Activated T-helper 1 cell treated with anti-CD3 and anti-CD28 coated beads, Interleukin-12 subunit alpha, Interleukin-12 subunit beta, Interleukin-2, Interleukin-4 antibody, amounts not matched to agents 30 ng/mL and 10 ng/mL and 1 ng/mL, durations not matched to agents 14 hours and 24 hours and 36 hours (primary cell): ENCODE measurements at regions of chr3 and their contacts with region 1.

Region 1: DNA sequence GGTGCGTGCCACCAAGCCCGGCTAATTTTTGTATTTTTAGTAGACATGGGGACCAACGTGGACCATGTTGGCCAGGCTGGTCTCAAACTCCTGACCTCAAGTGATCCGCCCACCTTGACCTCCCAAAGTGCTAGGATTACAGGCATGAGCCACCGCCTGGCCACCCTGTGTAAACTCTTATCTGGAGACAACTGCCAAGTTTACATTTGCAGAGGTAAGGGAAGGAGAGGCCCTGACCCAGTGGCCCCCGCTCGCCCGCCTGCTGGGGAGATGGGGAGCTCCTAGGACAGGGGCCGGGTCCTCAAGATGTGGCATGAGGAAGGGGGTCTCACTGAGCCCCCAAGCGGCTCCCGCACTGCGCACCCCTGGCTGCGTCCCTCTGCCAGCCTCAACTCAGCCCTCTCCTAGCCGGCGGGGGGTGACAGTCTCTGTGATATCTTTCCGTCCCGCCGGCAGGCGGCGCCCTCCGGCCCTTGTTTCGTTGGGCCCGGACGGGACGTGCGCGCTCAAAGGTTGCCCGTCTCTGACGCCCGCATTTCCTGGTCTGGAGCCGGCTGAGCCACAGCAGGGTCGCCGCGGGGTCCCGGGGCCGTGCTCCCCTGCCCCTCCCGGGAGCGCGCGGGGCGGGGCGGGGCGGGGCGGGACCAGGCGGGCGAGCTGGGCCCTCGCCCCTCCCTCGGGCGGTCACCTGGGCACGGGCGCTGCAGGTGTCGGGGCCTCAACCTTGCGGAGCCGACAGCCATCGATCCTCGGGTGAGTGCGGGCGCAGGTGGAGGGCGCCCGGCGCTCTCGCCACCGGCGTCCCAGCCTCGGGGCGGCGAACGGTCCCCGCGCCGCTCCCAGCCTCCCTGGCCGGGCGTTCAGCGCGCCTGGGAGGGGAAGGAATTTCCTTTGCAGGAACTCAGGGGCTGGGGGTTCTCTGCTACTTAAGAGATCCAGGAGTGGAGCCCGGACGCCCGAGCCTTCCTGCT is at the start of gene GPR160:
- DNase-seq: peak; percentile 73
- H3K4me3 Mint-ChIP-seq: peak within 1 kb of the TSS; percentile 82
- H3K27ac Mint-ChIP-seq: peak within 1 kb of the TSS; percentile 42
- H3K4me1 Mint-ChIP-seq: peaks cover 24% of the 10 kb centered on the region
- H3K27me3 Mint-ChIP-seq: peaks cover 4% of the 10 kb centered on the region
- total RNA-seq, gene GPR160: 3.4 and 3.5 TPM in 2 replicates

Region 2: DNA sequence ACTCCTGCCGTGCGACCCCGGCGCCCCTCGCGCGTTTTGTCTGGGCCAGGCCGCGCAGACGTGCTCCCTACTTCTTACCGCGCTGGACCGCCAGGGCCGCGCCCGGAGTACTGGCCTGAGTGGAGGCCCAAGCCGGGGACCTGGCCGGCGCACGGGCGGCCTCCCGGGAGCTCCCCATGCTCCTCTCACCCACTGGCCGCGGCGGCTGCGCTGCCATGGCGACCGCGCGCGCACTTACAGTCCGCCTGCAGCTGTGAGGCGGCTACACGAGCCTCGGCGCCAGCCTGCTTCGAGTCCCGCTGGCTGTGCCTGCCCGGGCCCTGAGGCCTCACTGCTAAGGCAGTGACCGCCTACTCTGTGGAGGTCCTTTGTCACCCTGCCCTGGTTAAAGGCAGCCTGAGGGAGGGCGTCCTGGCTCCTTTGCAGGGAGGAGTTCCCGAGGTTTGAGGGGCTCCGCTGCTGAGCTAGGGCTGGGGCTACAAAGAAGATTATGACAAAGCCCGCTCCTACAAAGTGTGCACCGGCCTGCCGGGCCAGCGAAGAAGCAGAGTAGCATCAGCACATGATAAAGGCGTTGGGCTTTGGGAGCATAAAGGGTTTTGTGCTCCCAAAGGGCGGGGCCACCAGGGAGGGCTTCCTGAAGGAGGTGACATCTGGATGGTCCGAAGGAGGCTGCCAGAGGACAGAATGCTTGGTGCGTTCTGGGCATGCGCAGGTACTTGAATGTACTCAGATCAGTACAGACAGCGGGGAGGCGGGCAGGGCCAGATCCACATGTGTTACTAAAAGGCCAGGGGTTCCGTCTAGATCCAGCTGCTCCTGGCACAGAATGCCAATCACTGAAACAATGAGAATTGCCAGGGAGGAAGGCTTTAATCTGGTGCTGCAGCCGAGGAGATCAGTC is 225.2 kb before region 1 on chr3 and contains the starts of genes LRRC34 and LRRIQ4:
- intact Hi-C with region 1: loop called (anchors 2 kb)
- DNase-seq: peak; percentile 64
- H3K4me3 Mint-ChIP-seq: peak within 1 kb of the TSS; percentile 83
- H3K27ac Mint-ChIP-seq: peak within 1 kb of the TSS; percentile 89
- H3K4me1 Mint-ChIP-seq: peaks cover 49% of the 10 kb centered on the region
- H3K27me3 Mint-ChIP-seq: peaks cover 6% of the 10 kb centered on the region
- total RNA-seq, gene LRRC34: 2.8 and 2.9 TPM in 2 replicates
- total RNA-seq, gene LRRIQ4: 0.10 and 0.12 TPM in 2 replicates

Region 3: DNA sequence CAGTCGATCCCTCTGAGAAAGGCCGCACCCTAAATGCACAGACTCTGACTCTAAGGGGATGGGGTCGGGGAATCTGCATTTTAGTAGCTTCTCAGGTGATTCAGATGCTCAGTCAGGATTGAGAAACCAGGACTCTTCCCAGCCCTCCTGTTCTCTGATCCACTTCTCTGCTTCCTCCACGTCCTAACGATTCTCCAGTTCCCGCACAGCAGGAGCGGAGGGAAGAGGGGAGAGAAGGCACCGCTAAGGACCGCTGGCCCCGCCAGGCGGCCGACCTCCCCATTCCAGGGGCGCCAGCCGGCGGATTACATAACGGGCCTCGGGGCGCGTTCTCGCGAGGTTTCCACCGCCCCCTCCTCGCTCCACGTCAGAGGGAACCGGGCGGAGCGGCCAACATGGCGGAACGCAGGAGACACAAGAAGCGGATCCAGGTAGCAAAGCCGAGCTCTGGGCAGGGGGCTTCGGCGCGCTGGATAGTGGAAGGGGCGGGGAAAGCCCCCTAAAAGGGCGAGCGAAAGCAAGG is 71.3 kb before region 1 on chr3 and contains the start of gene SEC62:
- intact Hi-C with region 1: loop called (anchors 2 kb)
- DNase-seq: peak; percentile 90
- H3K4me3 Mint-ChIP-seq: peak within 1 kb of the TSS; percentile 91
- H3K27ac Mint-ChIP-seq: peak within 1 kb of the TSS; percentile 99
- H3K4me1 Mint-ChIP-seq: peaks cover 42% of the 10 kb centered on the region
- H3K27me3 Mint-ChIP-seq: peaks cover 2% of the 10 kb centered on the region
- total RNA-seq, gene SEC62: 75.4 and 85.7 TPM in 2 replicates

Region 4: GRCh38 chr3:170055209-170055608 is 17.5 kb after region 1 on chr3:
- intact Hi-C with region 1: loop called (anchors 1 kb)
- DNase-seq: no peak
- H3K4me3 Mint-ChIP-seq: no peak overlapping the region
- H3K27ac Mint-ChIP-seq: no peak overlapping the region
- H3K4me1 Mint-ChIP-seq: peaks cover 43% of the 10 kb centered on the region
- H3K27me3 Mint-ChIP-seq: no peaks in the 10 kb centered on the region

Region 5: DNA sequence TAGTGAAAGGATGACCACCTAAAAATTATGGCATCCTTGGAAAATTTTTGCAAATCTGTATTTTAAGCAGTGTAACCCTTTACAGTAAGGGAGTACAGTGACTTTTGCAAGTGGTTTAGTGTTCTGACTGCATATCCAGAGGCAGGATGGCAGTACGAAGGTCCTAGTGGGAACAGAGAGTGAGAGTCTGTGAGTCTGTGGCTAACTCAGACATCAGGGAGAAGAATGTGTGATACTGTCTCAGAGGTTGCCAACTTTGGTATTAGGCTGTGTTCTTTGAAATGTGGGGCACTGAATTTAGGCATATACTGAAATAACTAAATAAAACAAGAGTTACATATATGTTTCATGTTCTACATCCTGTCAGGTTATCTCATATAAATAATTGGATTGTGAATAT is 210.1 kb after region 1 on chr3:
- intact Hi-C with region 1: no loop called
- DNase-seq: no peak
- H3K4me3 Mint-ChIP-seq: no peak overlapping the region
- H3K27ac Mint-ChIP-seq: no peak overlapping the region
- H3K4me1 Mint-ChIP-seq: peaks cover 7% of the 10 kb centered on the region
- H3K27me3 Mint-ChIP-seq: no peaks in the 10 kb centered on the region

Region 6: GRCh38 chr3:170811928-170812591 is 774.3 kb after region 1 on chr3:
- intact Hi-C with region 1: loop called (anchors 5 kb)
- DNase-seq: peak; percentile 49
- H3K4me3 Mint-ChIP-seq: no peak overlapping the region
- H3K27ac Mint-ChIP-seq: no peak overlapping the region
- H3K4me1 Mint-ChIP-seq: peaks cover 6% of the 10 kb centered on the region
- H3K27me3 Mint-ChIP-seq: peaks cover 10% of the 10 kb centered on the region